ENCODE measurements at regions of chr2 and their contacts with region 1.

Region 1: DNA sequence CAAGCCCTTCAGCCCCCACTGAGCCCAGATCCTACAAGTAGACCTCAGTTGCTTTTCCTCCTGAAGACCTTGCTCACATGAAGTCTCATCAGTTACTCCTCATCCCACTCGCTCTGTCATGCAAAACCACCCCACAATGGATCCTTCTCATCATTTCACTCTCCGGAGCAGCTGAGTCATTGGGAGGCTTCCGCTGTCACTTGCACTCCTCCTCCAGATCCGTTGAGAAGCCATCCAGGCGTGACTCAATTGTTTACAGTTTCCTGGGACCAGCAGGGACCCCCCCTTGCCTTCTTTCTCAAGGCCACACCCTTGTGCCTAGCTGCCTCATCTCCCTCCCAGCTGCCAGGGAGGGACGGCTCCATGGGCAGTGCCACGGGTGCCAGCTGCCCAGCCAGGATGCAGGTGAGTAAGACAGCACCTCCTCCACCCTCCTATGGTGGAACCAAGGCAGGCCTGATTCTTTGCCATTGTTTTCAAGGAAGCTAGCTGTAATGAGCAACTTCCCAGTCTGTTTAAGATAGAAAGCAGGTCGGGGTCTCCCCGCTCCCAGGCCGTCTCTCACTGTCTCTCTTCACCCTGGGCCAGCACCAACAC is 16.3 kb downstream of the GPR55 start:
- DNase-seq: no peak
- H3K4me3 Mint-ChIP-seq: no peak overlapping the region
- H3K27ac Mint-ChIP-seq: peak overlapping the region; percentile 29
- H3K4me1 Mint-ChIP-seq: peaks cover 41% of the 10 kb centered on the region
- H3K27me3 Mint-ChIP-seq: peaks cover 59% of the 10 kb centered on the region

Region 2: DNA sequence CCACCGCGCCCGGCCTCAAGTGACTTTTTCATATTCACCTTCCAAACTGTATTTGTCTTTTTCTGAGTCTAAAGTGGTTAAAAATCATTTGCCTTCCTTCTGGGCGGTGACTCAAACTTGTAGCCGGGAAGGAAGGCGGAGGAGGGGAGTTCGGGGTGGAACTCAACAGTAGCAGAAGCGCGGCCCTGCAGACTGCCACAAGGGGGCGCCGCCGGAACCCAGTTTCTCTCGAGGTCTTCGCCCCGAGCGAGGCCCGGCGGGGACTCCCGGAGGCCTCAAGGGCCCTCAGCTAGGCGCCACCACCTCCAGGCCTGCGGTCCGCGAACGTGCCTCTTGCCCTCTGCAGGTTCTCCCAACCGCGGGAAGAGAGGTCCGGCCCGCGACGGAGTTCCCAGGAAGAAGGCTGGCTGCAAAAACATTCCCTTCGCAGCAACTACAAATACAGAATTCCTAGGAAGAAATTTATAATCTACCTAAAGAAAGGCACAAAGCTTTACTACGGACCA is 60.8 kb before region 1 on chr2:
- intact Hi-C with region 1: loop called (anchors 1 kb)
- DNase-seq: peak; percentile 75
- H3K4me3 Mint-ChIP-seq: no peak overlapping the region
- H3K27ac Mint-ChIP-seq: no peak overlapping the region
- H3K4me1 Mint-ChIP-seq: peaks cover 22% of the 10 kb centered on the region
- H3K27me3 Mint-ChIP-seq: peaks cover 60% of the 10 kb centered on the region

Region 3: GRCh38 chr2:230919681-230920080 is 11.0 kb after region 1 on chr2:
- intact Hi-C with region 1: loop called (anchors 1 kb)
- DNase-seq: no peak
- H3K4me3 Mint-ChIP-seq: no peak overlapping the region
- H3K27ac Mint-ChIP-seq: no peak overlapping the region
- H3K4me1 Mint-ChIP-seq: peaks cover 47% of the 10 kb centered on the region
- H3K27me3 Mint-ChIP-seq: peaks cover 56% of the 10 kb centered on the region

Region 4: GRCh38 chr2:230924470-230925341 is 16.0 kb after region 1 on chr2 and contains the start of gene GPR55:
- intact Hi-C with region 1: loop called (anchors 1 kb)
- DNase-seq: peak; percentile 24
- H3K4me3 Mint-ChIP-seq: peak within 1 kb of the TSS; percentile 62
- H3K27ac Mint-ChIP-seq: peak within 1 kb of the TSS; percentile 84
- H3K4me1 Mint-ChIP-seq: peaks cover 58% of the 10 kb centered on the region
- H3K27me3 Mint-ChIP-seq: peaks cover 37% of the 10 kb centered on the region
- total RNA-seq, gene GPR55: 0.13 and 0.29 TPM in 2 replicates

Region 5: DNA sequence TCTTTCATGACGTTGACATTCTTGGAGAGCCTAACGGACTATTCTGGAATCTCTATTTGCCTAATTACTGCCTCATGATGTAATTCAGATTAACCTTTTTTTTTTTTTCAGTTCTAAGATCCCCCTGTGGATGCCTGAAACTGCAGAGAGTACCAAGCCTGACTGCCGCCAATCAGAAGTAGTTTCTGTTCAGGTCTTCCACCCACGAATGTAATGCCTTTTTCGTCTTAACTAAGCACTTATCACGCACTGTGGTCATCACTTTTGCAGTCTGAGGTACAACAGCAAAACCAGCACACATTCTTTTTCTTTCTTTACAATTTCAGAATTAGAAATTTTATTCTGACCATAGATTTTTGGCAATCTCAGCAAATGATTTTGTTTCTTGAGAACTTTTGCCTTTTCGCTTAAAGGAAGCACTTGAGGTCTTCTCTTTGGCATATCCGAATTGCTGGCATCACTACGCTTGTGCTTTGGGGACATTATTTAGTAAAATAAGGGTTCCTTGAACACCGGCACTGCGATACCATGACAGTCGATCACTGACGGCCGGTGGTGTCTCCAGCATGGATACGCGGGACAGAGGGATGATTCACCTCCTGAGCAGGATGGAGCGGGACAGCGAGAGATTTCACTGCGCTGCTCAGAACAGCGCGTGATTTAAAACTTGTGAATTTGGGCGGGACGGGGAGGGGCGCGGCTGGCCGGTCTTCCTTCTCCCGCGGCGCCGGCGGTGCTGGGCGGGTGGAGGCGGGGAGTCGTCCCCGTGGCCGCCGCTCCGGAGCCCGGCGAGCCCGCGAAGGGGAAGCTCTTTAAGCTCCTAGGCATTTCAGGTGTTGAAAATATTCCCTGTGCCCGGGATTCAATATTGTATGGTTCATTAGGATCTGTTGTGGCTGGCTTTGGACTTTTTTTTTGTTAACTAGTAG is 48.4 kb after region 1 on chr2:
- intact Hi-C with region 1: loop called (anchors 1 kb)
- DNase-seq: no peak
- H3K4me3 Mint-ChIP-seq: peak overlapping the region; percentile 80
- H3K27ac Mint-ChIP-seq: peak overlapping the region; percentile 38
- H3K4me1 Mint-ChIP-seq: peaks cover 29% of the 10 kb centered on the region
- H3K27me3 Mint-ChIP-seq: peaks cover 81% of the 10 kb centered on the region

Region 6: GRCh38 chr2:230974096-230974913 is 65.6 kb after region 1 on chr2:
- intact Hi-C with region 1: loop called (anchors 1 kb)
- DNase-seq: peak; percentile 51
- H3K4me3 Mint-ChIP-seq: peak overlapping the region; percentile 29
- H3K27ac Mint-ChIP-seq: peak overlapping the region; percentile 54
- H3K4me1 Mint-ChIP-seq: peaks cover 24% of the 10 kb centered on the region
- H3K27me3 Mint-ChIP-seq: peaks cover 35% of the 10 kb centered on the region

Region 7: DNA sequence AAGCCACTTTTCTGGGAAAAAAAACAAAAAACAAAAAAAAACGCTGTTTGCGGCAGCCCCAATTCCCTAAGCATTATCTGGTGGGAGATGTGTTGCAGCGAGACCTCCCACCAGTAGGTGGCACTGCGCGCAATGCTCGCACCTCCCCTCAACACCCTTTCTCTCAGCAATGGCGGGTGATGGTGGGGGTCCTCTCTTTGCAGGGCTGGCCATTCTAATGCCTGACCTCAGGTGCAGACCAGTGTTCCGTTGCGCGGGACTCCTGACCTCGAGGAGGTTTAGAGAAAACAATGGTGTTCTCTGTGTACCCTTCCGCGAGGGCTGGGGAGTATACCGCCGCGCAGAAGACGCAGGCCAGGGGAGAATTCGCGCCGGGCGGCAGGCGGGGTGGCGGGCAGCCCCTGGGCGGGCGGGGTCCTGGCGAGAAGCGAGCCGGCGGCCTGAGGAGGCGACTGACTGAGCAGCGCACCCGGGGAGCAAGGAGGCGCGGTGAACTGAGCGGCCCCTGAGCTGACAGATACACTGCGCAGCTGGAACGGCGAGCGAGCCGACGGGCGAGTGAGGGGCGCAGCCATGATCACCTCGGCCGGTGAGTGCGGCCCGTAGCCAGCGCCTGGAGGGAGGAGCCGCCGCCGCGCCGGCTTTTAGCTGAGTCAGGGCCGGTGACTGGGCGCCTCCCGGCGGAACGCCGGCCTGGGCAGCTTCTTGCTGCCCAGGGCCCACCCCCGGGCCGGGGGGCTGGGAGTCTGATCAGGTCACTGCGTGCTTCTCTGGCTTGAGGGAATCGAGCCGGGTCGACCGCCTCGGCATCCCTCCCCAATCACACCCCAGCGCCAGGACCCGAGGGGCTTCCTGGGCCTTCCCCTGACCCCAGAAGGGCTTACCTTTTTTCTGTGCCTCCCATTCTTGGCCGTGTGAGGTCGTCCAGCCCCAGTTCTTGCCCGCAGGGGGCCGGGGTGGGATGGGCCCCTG is 148.0 kb after region 1 on chr2 and contains the start of gene PSMD1:
- intact Hi-C with region 1: loop called (anchors 1 kb)
- DNase-seq: peak; percentile 89
- H3K4me3 Mint-ChIP-seq: peak within 1 kb of the TSS; percentile 98
- H3K27ac Mint-ChIP-seq: peak within 1 kb of the TSS; percentile 100
- H3K4me1 Mint-ChIP-seq: peaks cover 52% of the 10 kb centered on the region
- H3K27me3 Mint-ChIP-seq: no peaks in the 10 kb centered on the region
- total RNA-seq, gene PSMD1: 172 and 181 TPM in 2 replicates